H1 (cell line): ENCODE measurements at regions of chr15 and their contacts with region 1.

Region 1: GRCh38 chr15:84929744-84930371 is 45.4 kb downstream of the SLC28A1 start:
- DNase-seq: no peak
- H3K4me3 ChIP-seq: no peak overlapping the region
- H3K27ac ChIP-seq: no peak overlapping the region
- H3K4me1 ChIP-seq: no peaks in the 10 kb centered on the region; a peak in 1 of 7 replicates
- H3K27me3 ChIP-seq: no peaks in the 10 kb centered on the region
- CTCF ChIP-seq: no peak
- EP300 ChIP-seq: no peak
- POLR2A ChIP-seq: no peak
- RAD21 ChIP-seq: no peak

Region 2: GRCh38 chr15:84606653-84607120 is 323.2 kb before region 1 on chr15:
- CTCF ChIA-PET with region 1: no interaction called
- POLR2A ChIA-PET with region 1: no interaction called
- DNase-seq: no peak
- H3K4me3 ChIP-seq: no peak overlapping the region
- H3K27ac ChIP-seq: no peak overlapping the region
- H3K4me1 ChIP-seq: peaks cover 9 to 28% (median 25%) of the 10 kb centered on the region in 4 experiments
- H3K27me3 ChIP-seq: no peaks in the 10 kb centered on the region; a peak in 2 of 7 replicates
- CTCF ChIP-seq: no peak
- EP300 ChIP-seq: no peak
- POLR2A ChIP-seq: no peak
- RAD21 ChIP-seq: no peak

Region 3: GRCh38 chr15:84697236-84697990 is 232.4 kb before region 1 on chr15:
- CTCF ChIA-PET with region 1: no interaction called
- POLR2A ChIA-PET with region 1: no interaction called
- DNase-seq: no peak
- H3K4me3 ChIP-seq: no peak overlapping the region
- H3K27ac ChIP-seq: no peak overlapping the region
- H3K4me1 ChIP-seq: no peaks in the 10 kb centered on the region
- H3K27me3 ChIP-seq: no peaks in the 10 kb centered on the region
- CTCF ChIP-seq: no peak
- EP300 ChIP-seq: no peak
- POLR2A ChIP-seq: no peak
- RAD21 ChIP-seq: no peak

Region 4: GRCh38 chr15:84734794-84735479 is 194.9 kb before region 1 on chr15:
- CTCF ChIA-PET with region 1: no interaction called
- POLR2A ChIA-PET with region 1: no interaction called
- DNase-seq: peak; percentile 75 to 88
- H3K4me3 ChIP-seq: peak overlapping the region; percentile 3 to 42 (median 27); a peak in 4 of 8 replicates
- H3K27ac ChIP-seq: peak overlapping the region; percentile 20; the same call in 1 of the 2 replicates
- H3K4me1 ChIP-seq: peaks cover 5 to 11% (median 8%) of the 10 kb centered on the region in 4 experiments
- H3K27me3 ChIP-seq: no peaks in the 10 kb centered on the region
- CTCF ChIP-seq: no peak
- EP300 ChIP-seq: 0 out of 3 replicates have a peak, but pooled peaks of 1 of the 2 experiments have one; percentile 8
- POLR2A ChIP-seq: no peak
- RAD21 ChIP-seq: no peak

Region 5: GRCh38 chr15:84783496-84784251 is 146.2 kb before region 1 on chr15:
- CTCF ChIA-PET with region 1: no interaction called
- POLR2A ChIA-PET with region 1: no interaction called
- DNase-seq: peak; percentile 21 to 72
- H3K4me3 ChIP-seq: no peak overlapping the region
- H3K27ac ChIP-seq: no peak overlapping the region
- H3K4me1 ChIP-seq: peaks cover 0 to 8% (median 4%) of the 10 kb centered on the region in 4 experiments; a peak in 4 of 7 replicates
- H3K27me3 ChIP-seq: no peaks in the 10 kb centered on the region
- CTCF ChIP-seq: peak; percentile 36 to 54 (median 50)
- EP300 ChIP-seq: no peak
- POLR2A ChIP-seq: no peak
- RAD21 ChIP-seq: peak; percentile 42

Region 6: DNA sequence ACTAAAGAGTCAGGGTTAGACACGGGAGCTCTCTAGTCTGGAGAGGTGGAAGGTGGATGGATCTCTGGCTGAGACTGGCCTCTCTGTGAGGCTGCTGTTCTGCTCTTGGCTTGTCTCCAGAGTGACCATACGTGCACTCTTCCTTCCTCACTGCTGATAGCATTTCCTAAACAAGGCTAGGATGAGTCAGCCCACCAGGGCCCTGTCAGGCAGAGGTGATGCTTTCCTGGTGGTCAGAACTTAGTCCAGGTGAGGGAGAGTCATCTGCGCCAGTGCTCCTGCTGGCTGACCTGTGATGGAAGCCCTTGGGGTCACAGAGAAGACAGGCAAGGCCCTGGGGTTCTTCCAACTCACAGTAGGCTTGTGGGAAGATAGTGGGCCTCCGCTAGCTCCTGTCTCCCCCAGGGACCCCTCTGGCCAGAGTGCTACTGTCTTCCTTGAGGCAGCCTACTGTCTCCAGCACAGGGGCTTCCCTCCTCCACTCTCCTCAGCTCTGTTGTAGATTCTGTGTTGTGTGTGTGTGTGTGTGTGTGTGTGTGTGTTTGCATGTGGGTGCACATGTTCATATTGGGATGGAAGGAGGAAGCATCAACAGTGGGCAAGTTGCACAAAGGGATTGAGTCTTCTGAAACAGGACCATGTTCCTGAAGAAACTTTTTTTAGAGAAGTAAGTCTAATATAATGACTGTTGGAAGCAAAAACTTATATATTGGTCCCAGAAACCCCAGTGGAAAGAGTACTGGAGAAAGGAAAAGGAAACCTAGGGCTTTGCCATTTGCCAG is 96.2 kb before region 1 on chr15:
- CTCF ChIA-PET with region 1: interaction called, 11 read pairs
- POLR2A ChIA-PET with region 1: no interaction called
- DNase-seq: no peak
- H3K4me3 ChIP-seq: no peak overlapping the region
- H3K27ac ChIP-seq: no peak overlapping the region
- H3K4me1 ChIP-seq: no peaks in the 10 kb centered on the region
- H3K27me3 ChIP-seq: no peaks in the 10 kb centered on the region
- CTCF ChIP-seq: no peak
- EP300 ChIP-seq: no peak
- POLR2A ChIP-seq: no peak
- RAD21 ChIP-seq: no peak

Region 7: DNA sequence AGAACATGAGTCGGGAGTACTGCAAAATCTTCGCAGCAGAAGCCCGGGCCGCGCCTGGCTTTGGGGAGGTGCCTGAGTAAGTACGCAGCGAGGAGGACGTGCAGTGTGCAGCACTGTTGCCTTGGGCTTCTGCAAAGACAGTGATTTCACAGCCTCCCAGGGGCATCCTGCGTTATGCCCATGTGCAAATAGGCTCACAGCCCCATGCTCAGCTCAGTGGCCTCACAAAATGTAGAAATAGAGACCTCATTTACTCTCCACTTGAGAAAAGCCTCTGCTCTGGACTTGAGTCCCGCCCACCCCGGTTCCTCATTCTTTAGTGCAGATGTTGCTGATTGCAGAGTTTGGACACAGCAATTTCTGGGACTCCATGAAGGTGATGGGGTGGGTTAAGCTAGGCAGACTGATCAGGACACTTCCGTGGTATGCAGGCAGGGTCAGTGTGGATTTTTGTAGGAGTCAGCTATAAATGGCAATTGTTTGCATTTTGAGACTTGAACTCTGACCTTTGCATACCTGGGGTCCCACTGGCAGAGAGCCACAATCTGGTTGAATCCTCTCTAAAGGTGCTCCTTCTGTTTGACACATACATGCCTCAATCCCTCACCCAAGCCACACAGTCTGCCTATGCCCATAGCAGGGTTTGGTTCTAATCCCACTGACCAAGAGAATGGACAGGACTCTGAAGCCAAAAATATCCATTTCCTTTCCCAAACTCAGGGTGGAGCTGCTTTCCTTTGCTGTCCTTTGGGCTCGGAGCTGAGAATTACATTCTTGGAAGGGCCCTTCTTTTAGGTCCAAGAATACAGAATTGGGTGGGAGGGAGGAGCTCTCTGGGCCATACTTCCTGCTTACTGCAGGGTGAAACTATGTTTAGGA is 66.1 kb before region 1 on chr15:
- CTCF ChIA-PET with region 1: interaction called, 28 read pairs
- POLR2A ChIA-PET with region 1: no interaction called
- DNase-seq: no peak
- H3K4me3 ChIP-seq: no peak overlapping the region
- H3K27ac ChIP-seq: no peak overlapping the region
- H3K4me1 ChIP-seq: no peaks in the 10 kb centered on the region
- H3K27me3 ChIP-seq: no peaks in the 10 kb centered on the region
- CTCF ChIP-seq: peak in 2 of 3 experiments; percentile 21 to 25; a peak in 3 of 4 replicates
- EP300 ChIP-seq: no peak
- POLR2A ChIP-seq: no peak
- RAD21 ChIP-seq: peak; percentile 34 to 47; a peak in 3 of 4 replicates

Region 8: GRCh38 chr15:84883433-84883832 is 46.4 kb before region 1 on chr15:
- CTCF ChIA-PET with region 1: interaction called, 39 read pairs
- POLR2A ChIA-PET with region 1: no interaction called
- DNase-seq: no peak
- H3K4me3 ChIP-seq: no peak overlapping the region
- H3K27ac ChIP-seq: no peak overlapping the region
- H3K4me1 ChIP-seq: no peaks in the 10 kb centered on the region; a peak in 1 of 7 replicates
- H3K27me3 ChIP-seq: no peaks in the 10 kb centered on the region
- CTCF ChIP-seq: no peak
- EP300 ChIP-seq: no peak
- POLR2A ChIP-seq: no peak
- RAD21 ChIP-seq: no peak

Region 9: GRCh38 chr15:84911879-84912660 is 17.8 kb before region 1 on chr15:
- CTCF ChIA-PET with region 1: interaction called, 15 read pairs
- POLR2A ChIA-PET with region 1: interaction called, 3 read pairs
- DNase-seq: no peak
- H3K4me3 ChIP-seq: no peak overlapping the region
- H3K27ac ChIP-seq: no peak overlapping the region
- H3K4me1 ChIP-seq: no peaks in the 10 kb centered on the region; a peak in 2 of 7 replicates
- H3K27me3 ChIP-seq: no peaks in the 10 kb centered on the region
- CTCF ChIP-seq: no peak
- EP300 ChIP-seq: no peak
- POLR2A ChIP-seq: no peak
- RAD21 ChIP-seq: no peak

Region 10: GRCh38 chr15:84949845-84950569 is 20.1 kb after region 1 on chr15:
- CTCF ChIA-PET with region 1: interaction called, 11 read pairs
- POLR2A ChIA-PET with region 1: no interaction called
- DNase-seq: no peak
- H3K4me3 ChIP-seq: no peak overlapping the region
- H3K27ac ChIP-seq: no peak overlapping the region
- H3K4me1 ChIP-seq: 0 out of 7 replicates have a peak, but pooled peaks cover 0 to 4% (median 0%) of the 10 kb centered on the region in 4 experiments
- H3K27me3 ChIP-seq: no peaks in the 10 kb centered on the region
- CTCF ChIP-seq: no peak
- EP300 ChIP-seq: no peak
- POLR2A ChIP-seq: no peak
- RAD21 ChIP-seq: no peak